Caco-2 (cell line): ENCODE measurements at regions of chr4 and their contacts with region 1.

Region 1: DNA sequence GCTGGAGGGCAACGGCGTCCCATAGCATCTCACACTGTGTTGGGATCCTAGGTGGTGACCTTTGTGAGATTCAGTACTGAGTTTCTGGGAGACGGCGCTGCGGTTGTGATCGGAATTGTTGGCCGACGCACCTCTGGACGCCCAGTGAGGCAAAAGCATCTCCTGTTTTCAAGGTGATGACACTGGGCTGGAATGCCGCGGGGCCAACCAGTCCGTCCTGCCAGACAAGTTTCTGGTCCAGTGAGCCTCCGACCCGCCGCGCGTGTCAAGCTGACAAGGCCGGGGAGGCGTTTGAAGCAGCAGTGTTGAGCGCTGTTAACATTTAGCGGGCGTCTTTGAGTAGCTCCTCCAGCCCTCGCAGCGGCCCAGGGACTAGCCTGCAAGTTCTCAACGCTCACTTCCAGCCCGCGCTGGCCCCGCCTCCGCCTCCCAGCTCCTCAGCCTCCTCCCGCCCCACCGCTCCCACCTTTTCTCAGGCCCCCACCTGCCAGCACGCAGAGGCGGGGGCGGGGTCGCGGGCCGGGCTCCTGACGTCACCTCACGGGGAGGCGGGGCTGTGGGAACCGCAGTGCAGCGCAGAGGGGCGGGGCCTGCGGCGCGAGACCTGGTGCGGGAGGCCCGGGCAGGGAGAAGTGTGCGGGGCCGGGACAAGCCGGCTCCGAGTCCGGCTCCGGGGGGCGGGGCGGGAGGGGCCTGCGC is 476 bp upstream of the CDS1 start:
- DNase-seq: peak; percentile 97 to 99
- H3K4me3 ChIP-seq: peak overlapping the region; percentile 80
- H3K4me3 Mint-ChIP-seq: peak overlapping the region; percentile 73
- H3K27ac Mint-ChIP-seq: peak overlapping the region; percentile 90
- H3K4me1 ChIP-seq: peaks cover 34% of the 10 kb centered on the region
- H3K4me1 Mint-ChIP-seq: peaks cover 35% of the 10 kb centered on the region
- H3K27me3 ChIP-seq: no peaks in the 10 kb centered on the region
- H3K27me3 Mint-ChIP-seq: no peaks in the 10 kb centered on the region
- CTCF ChIP-seq: no peak

Region 2: GRCh38 chr4:84596826-84597225 is 14.4 kb after region 1 on chr4:
- CTCF ChIA-PET with region 1: interaction called, 5 read pairs
- POLR2A ChIA-PET with region 1: interaction called, 3 read pairs
- intact Hi-C with region 1: loop called (anchors 1 kb)
- DNase-seq: peak; percentile 53 to 58
- H3K4me3 ChIP-seq: no peak overlapping the region
- H3K4me3 Mint-ChIP-seq: no peak overlapping the region
- H3K27ac Mint-ChIP-seq: peak overlapping the region; percentile 92
- H3K4me1 ChIP-seq: peaks cover 41% of the 10 kb centered on the region
- H3K4me1 Mint-ChIP-seq: peaks cover 13% of the 10 kb centered on the region
- H3K27me3 ChIP-seq: no peaks in the 10 kb centered on the region
- H3K27me3 Mint-ChIP-seq: no peaks in the 10 kb centered on the region
- CTCF ChIP-seq: no peak

Region 3: DNA sequence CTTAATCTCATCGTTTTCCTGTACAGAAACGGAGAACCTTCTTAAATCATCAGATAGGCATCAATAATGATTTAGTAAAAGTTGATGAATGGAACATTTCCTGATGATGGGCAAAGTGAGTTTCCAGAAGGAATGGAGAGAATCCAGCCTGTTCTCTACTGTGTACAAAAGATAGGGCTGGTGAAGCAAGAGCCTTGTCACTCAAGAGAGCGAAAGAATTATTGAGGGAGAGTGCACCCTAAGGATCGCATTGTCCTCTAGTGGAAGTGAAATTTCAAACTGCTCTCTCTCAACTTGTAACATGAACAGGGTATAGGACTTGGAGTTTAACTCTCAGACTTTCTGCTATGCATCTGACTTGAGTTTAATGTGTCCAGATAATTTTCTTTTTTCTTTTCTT is 70.0 kb after region 1 on chr4:
- CTCF ChIA-PET with region 1: interaction called, 4 read pairs
- POLR2A ChIA-PET with region 1: no interaction called
- intact Hi-C with region 1: loop called (anchors 1 kb)
- DNase-seq: no peak
- H3K4me3 ChIP-seq: no peak overlapping the region
- H3K4me3 Mint-ChIP-seq: no peak overlapping the region
- H3K27ac Mint-ChIP-seq: no peak overlapping the region
- H3K4me1 ChIP-seq: no peaks in the 10 kb centered on the region; the same call in 1 of the 2 replicates
- H3K4me1 Mint-ChIP-seq: no peaks in the 10 kb centered on the region
- H3K27me3 ChIP-seq: no peaks in the 10 kb centered on the region
- H3K27me3 Mint-ChIP-seq: no peaks in the 10 kb centered on the region
- CTCF ChIP-seq: no peak

Region 4: GRCh38 chr4:84699001-84699671 is 116.7 kb after region 1 on chr4:
- CTCF ChIA-PET with region 1: interaction called, 5 read pairs
- POLR2A ChIA-PET with region 1: no interaction called
- intact Hi-C with region 1: loop called (anchors 5 kb)
- DNase-seq: peak in 1 of 2 experiments; percentile 27
- H3K4me3 ChIP-seq: no peak overlapping the region
- H3K4me3 Mint-ChIP-seq: no peak overlapping the region
- H3K27ac Mint-ChIP-seq: no peak overlapping the region
- H3K4me1 ChIP-seq: peaks cover 9% of the 10 kb centered on the region
- H3K4me1 Mint-ChIP-seq: peaks cover 7% of the 10 kb centered on the region
- H3K27me3 ChIP-seq: no peaks in the 10 kb centered on the region
- H3K27me3 Mint-ChIP-seq: no peaks in the 10 kb centered on the region
- CTCF ChIP-seq: no peak

Region 5: DNA sequence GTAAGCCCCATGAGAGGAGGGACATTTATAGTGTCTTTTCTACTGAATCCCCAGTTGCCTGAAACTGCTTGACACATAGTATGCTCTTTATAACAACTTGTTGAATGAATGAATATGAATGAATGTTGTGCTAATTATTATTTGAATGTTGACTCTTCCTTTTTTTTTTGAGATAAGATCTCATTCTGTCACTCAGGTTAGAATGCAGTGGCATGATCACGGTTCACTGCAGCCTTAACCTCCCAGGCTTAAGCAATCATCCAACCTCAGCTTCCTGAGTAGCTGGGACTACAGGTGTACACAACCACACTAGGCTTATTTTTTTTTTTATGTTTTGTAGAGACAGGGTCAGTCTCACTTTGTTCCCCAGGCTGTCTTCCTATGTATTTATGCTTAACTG is 498.7 kb after region 1 on chr4:
- CTCF ChIA-PET with region 1: no interaction called
- POLR2A ChIA-PET with region 1: no interaction called
- intact Hi-C with region 1: no loop called
- DNase-seq: no peak
- H3K4me3 ChIP-seq: no peak overlapping the region
- H3K4me3 Mint-ChIP-seq: no peak overlapping the region
- H3K27ac Mint-ChIP-seq: no peak overlapping the region
- H3K4me1 ChIP-seq: no peaks in the 10 kb centered on the region
- H3K4me1 Mint-ChIP-seq: no peaks in the 10 kb centered on the region
- H3K27me3 ChIP-seq: no peaks in the 10 kb centered on the region; the same call in 1 of the 2 replicates
- H3K27me3 Mint-ChIP-seq: no peaks in the 10 kb centered on the region
- CTCF ChIP-seq: no peak